ENCODE measurements at regions of chr19 and their contacts with region 1.

Region 1: GRCh38 chr19:13277104-13277809 is 127.0 kb downstream of the IER2 start:
- DNase-seq: peak; percentile 86
- H3K4me3 Mint-ChIP-seq: no peak overlapping the region
- H3K27ac Mint-ChIP-seq: no peak overlapping the region
- H3K4me1 Mint-ChIP-seq: no peaks in the 10 kb centered on the region
- H3K27me3 Mint-ChIP-seq: no peaks in the 10 kb centered on the region
- CTCF ChIP-seq: peak; percentile 62

Region 2: GRCh38 chr19:13215546-13216380 is 61.5 kb before region 1 on chr19:
- CTCF ChIA-PET with region 1: no interaction called
- POLR2A ChIA-PET with region 1: no interaction called
- intact Hi-C with region 1: no loop called
- DNase-seq: peak; percentile 40
- H3K4me3 Mint-ChIP-seq: no peak overlapping the region
- H3K27ac Mint-ChIP-seq: no peak overlapping the region
- H3K4me1 Mint-ChIP-seq: peaks cover 7% of the 10 kb centered on the region
- H3K27me3 Mint-ChIP-seq: no peaks in the 10 kb centered on the region
- CTCF ChIP-seq: no peak

Region 3: DNA sequence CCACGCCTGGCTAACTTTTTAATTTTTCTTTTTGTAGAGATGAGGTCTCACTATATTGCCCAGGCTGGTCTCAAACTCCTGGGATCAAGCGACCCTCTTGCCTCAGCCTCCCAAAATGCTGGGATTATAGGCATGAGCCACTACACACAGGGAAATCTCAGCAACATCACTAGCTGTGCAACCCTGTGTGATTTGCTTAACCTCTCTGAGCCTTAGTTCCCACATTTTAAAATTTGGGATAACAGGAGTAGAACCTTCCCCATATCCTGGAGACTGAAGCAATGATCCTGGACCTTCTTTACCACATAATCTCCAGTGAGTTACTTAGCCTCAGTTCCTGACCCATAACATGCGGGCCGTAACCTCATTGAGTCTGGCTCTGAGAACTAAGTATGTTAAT is 12.0 kb after region 1 on chr19:
- CTCF ChIA-PET with region 1: interaction called, 10 read pairs
- POLR2A ChIA-PET with region 1: no interaction called
- intact Hi-C with region 1: no loop called
- DNase-seq: no peak
- H3K4me3 Mint-ChIP-seq: no peak overlapping the region
- H3K27ac Mint-ChIP-seq: no peak overlapping the region
- H3K4me1 Mint-ChIP-seq: no peaks in the 10 kb centered on the region
- H3K27me3 Mint-ChIP-seq: no peaks in the 10 kb centered on the region
- CTCF ChIP-seq: no peak

Region 4: GRCh38 chr19:13430790-13431582 is 153.7 kb after region 1 on chr19:
- CTCF ChIA-PET with region 1: interaction called, 30 read pairs
- POLR2A ChIA-PET with region 1: no interaction called
- intact Hi-C with region 1: loop called (anchors 1 kb)
- DNase-seq: peak; percentile 72
- H3K4me3 Mint-ChIP-seq: no peak overlapping the region
- H3K27ac Mint-ChIP-seq: no peak overlapping the region
- H3K4me1 Mint-ChIP-seq: no peaks in the 10 kb centered on the region
- H3K27me3 Mint-ChIP-seq: peaks cover 11% of the 10 kb centered on the region
- CTCF ChIP-seq: peak; percentile 82

Region 5: DNA sequence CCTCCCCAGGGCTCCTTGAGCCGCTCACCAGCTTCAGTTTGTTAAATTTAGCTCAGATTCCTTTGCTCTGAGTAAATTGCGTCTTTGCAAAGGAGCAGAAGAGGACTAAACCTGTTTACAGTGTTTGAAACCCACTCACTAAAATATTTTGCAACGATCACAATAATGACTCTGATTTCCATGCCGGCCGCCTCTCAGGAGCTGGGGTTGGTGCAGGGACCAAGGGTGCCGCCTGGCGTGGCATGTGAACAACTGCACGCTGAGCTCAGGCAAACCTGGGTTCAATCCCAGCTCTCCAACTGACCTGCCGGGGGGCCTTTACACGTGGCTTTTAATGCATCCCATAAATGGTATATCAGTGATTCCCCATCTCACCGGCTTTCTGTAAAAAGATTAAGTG is 297.7 kb after region 1 on chr19:
- CTCF ChIA-PET with region 1: interaction called, 19 read pairs
- POLR2A ChIA-PET with region 1: no interaction called
- intact Hi-C with region 1: no loop called
- DNase-seq: no peak
- H3K4me3 Mint-ChIP-seq: no peak overlapping the region
- H3K27ac Mint-ChIP-seq: no peak overlapping the region
- H3K4me1 Mint-ChIP-seq: no peaks in the 10 kb centered on the region
- H3K27me3 Mint-ChIP-seq: peaks cover 35% of the 10 kb centered on the region
- CTCF ChIP-seq: no peak

Region 6: DNA sequence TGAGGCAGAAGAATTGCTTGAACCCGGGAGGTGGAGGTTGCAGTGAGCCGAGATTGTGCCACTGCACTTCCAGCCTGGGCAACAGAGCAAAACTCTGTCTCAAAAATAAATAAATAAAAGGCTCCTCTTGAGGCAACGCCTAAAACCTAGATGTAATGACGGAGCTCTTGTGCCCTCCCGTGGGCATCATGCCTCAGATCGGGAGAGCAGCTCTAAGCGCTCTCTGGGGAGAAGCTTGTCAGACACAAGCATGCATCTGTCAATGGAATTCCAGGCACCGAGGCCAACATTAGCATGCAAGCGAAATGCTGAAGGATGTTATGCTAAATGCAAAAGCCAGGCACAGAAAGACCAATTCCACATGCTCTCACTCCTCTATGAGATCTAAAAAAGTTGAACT is 441.5 kb after region 1 on chr19:
- CTCF ChIA-PET with region 1: interaction called, 16 read pairs
- POLR2A ChIA-PET with region 1: no interaction called
- intact Hi-C with region 1: loop called (anchors 1 kb)
- DNase-seq: peak; percentile 52
- H3K4me3 Mint-ChIP-seq: no peak overlapping the region
- H3K27ac Mint-ChIP-seq: no peak overlapping the region
- H3K4me1 Mint-ChIP-seq: no peaks in the 10 kb centered on the region
- H3K27me3 Mint-ChIP-seq: no peaks in the 10 kb centered on the region
- CTCF ChIP-seq: peak; percentile 59

Measured in MCF 10A (cell line).